ENCODE measurements at regions of chr12 and their contacts with region 1.

Region 1: DNA sequence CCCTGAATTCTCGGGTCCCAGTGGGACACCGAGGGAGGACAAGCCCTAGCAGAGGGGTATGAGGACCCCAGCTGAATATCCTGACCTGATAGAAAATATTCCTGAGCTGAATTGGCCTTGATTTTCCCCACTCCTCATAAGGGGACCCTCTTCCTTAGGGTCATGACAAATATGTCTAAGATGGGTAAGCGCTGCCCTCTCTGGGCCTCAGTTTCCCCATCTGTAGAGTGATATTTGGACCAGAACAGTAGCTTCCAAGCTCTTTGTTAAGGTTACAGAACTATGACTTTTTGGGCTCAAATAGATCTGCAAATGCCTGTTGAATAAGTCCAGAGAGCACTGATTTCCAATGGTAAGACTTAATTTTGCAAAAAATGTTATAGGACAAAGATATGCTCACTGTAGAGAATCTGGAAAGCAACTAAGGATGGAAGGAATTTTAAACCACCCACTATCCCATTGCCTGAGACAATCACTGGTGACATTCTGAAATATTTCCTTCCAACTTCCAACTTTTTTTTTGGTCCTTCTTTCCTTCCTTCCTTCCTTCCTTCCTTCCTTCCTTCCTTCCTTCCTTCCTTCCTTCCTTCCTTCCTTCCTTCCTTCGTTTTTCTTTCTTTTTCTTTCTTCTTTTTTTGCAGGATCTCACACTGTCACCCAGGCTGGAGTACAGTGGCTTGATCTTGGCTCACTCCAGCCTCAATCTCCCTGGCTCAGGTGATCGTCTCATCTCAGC is 32.0 kb downstream of the MYL2 start:
- DNase-seq: no peak
- H3K4me3 Mint-ChIP-seq: peak overlapping the region; percentile 80
- H3K27ac Mint-ChIP-seq: no peak overlapping the region
- H3K4me1 Mint-ChIP-seq: no peaks in the 10 kb centered on the region
- H3K27me3 Mint-ChIP-seq: peaks cover 50% of the 10 kb centered on the region
- CTCF ChIP-seq: no peak

Region 2: DNA sequence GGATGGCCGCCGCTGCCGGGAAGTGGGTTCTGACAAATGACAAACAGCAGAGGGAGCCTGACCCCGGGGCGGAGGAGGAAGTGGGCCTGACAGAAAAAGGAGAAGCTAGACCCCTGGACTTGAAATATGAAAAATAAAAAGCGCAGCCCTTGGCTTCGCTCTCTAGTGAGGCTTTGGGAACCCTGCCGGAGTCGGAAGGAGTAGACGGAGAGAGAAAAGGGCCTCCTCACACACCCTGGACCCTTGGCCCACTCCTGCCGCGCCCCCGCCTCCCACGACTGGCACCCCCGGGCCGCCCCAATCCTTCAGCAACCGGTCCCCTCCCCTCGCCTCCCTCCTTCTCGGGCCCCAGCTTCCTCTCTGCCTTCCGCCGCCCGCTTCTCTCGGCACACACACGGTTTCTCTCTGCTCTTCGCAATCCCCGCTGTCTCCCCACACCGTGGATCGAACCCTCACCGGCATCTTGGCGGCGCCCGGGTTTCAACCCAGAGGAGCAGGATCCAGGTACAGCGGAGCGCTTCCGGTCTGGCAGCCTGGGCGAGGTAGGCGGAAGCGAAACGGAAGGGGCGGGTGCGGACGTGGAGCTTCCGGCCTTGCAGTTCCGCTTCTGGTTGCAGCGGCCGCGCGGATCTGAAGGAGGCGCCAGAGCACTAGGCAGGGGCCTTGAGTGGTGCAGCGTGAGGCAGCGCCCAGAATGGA is 438.5 kb before region 1 on chr12 and contains the start of gene ARPC3:
- CTCF ChIA-PET with region 1: interaction called, 7 read pairs
- intact Hi-C with region 1: loop called (anchors 5 kb)
- DNase-seq: peak; percentile 96
- H3K4me3 Mint-ChIP-seq: peak within 1 kb of the TSS; percentile 92
- H3K27ac Mint-ChIP-seq: peak within 1 kb of the TSS; percentile 96
- H3K4me1 Mint-ChIP-seq: peaks cover 8% of the 10 kb centered on the region
- H3K27me3 Mint-ChIP-seq: no peaks in the 10 kb centered on the region
- CTCF ChIP-seq: peak; percentile 79
- total RNA-seq, gene ARPC3: 321 and 344 TPM in 2 replicates

Region 3: DNA sequence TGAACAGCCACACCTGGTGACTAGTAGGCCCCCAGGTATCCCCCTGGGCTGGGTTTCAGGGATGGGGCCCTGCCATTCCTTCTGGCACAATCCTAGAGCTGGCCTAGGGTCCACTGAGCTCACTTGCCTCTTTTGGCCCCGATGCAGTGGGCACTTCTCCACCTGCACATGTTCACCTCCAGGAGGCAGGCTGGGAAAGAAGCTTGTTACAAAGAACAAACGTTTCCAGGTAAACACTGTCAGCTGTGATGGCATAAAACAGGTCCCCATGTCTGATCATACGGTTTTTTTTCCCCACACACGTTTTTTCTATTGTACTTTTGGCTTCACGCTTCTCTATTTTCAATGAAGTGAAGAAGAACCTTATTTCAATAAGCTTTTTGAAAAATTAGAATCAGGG is 183.7 kb before region 1 on chr12:
- CTCF ChIA-PET with region 1: interaction called, 23 read pairs
- intact Hi-C with region 1: loop called (anchors 1 kb)
- DNase-seq: peak; percentile 62
- H3K4me3 Mint-ChIP-seq: no peak overlapping the region
- H3K27ac Mint-ChIP-seq: no peak overlapping the region
- H3K4me1 Mint-ChIP-seq: peaks cover 8% of the 10 kb centered on the region
- H3K27me3 Mint-ChIP-seq: no peaks in the 10 kb centered on the region
- CTCF ChIP-seq: no peak

Region 4: DNA sequence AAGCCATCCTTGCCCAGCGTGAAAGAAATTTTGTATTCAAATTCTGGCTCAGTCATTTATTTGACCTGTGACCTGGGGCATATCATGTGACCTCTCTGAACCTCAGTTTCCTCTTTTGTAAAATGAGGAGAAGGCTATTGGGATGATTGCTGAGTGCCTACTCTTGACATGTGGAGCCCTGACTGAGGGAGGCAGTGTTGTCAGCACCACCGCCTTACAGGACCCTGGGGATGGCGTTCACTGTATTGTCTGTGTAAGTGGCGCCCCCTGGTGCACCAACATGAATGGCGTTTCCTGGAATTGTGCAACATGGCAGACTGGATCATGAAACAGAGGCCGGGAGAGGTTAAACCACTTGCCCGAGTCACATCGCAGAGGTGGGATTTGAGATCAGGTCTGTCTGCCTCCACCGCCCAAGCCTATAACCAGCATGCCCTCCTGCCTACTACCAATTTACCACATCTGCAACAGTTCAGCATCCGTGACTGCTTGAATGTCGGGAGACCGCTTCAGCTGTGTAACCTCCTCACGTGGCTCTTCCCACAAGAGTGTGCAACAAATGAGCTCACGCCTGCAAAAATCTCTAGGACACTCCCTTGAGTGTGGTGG is 61.7 kb before region 1 on chr12:
- CTCF ChIA-PET with region 1: interaction called, 7 read pairs
- intact Hi-C with region 1: loop called (anchors 1 kb)
- DNase-seq: peak; percentile 93
- H3K4me3 Mint-ChIP-seq: peak overlapping the region; percentile 61
- H3K27ac Mint-ChIP-seq: no peak overlapping the region
- H3K4me1 Mint-ChIP-seq: no peaks in the 10 kb centered on the region
- H3K27me3 Mint-ChIP-seq: peaks cover 31% of the 10 kb centered on the region
- CTCF ChIP-seq: peak; percentile 95

Region 5: DNA sequence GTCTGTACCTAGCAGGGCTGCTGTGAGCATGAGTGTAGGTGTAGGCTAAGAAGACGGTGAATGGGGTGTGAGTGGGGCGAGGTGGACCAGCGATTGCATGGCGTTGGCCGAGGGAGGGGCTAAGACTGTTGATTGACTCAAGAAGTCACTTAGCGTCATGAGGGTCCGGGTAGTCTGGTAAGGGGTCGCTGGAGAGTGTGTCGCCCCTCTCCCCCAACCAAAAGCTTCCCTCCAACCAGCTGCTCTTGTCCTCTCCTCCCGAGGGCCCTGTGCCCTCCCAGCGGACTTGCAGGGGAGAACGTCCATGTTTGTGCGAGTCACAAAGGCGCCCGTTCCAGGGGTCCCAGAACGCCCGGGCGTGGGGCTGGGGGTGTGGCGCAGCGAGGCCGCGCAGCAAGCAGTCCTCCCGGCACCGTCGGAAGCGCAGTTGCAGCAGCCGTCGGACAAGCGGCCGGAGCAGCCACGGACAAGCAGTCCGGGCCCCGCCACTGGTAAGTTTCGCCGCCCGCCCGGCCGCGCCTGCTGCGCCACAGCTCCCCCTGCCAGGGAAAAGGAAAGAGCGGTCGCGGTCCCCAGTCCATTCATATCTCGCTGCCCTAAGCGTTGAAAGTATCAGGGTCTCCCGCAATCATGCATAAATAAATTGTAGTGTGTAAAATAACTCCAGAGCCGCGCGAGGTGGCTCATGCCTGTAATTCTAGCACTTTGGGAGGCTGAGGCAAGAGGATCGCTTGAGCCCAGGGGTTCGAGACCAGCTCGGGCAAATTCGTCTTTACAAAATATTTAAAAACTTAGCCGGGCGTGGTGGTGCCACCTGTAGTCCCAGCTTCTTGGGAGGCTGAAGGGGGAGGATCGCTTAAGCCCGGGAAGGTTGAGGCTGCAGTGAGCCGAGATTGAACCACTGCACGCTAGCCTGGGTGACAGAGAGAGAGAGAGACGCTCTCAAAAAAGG is 41.5 kb before region 1 on chr12 and contains the start of gene CCDC63:
- CTCF ChIA-PET with region 1: interaction called, 5 read pairs
- intact Hi-C with region 1: loop called (anchors 2 kb)
- DNase-seq: peak; percentile 82
- H3K4me3 Mint-ChIP-seq: peak within 1 kb of the TSS; percentile 75
- H3K27ac Mint-ChIP-seq: no peak within 1 kb of the TSS
- H3K4me1 Mint-ChIP-seq: no peaks in the 10 kb centered on the region
- H3K27me3 Mint-ChIP-seq: peaks cover 75% of the 10 kb centered on the region
- CTCF ChIP-seq: peak; percentile 62
- total RNA-seq, gene CCDC63: not detected in 2 replicates

Region 6: DNA sequence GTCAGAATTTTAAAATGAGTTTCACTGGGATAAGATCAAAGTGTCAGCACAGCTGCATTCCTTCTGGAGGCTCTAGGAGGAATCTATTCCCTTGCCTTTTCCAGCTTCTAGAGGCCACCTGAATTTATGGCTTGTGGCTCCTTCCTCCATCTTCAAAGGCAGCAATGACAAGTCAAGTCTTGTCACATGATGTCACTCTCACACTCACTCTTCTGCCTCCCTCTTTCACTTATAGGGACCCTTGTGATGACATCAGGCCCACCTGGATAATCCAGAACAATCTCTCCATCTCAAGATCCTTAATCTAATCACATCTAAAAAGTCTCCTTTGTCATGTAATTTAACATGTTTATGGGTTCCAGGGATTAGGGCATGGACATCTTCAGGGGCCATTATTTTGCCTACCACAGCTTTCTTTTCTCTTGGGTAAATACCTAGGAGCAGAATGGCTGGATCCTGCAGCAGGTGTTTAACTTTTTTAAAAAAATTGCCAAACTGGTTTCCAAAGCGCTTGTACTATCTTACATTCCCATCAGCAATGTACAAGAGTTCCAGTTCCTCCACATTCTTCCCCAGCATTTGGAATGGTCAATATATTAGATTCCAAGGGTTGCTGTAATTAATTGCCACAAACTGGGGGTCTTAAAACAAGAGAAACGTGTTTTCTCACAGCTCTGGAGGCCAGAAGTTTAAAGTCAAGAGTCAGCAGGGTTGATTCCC is 59.5 kb after region 1 on chr12:
- CTCF ChIA-PET with region 1: no interaction called
- intact Hi-C with region 1: no loop called
- DNase-seq: no peak
- H3K4me3 Mint-ChIP-seq: no peak overlapping the region
- H3K27ac Mint-ChIP-seq: no peak overlapping the region
- H3K4me1 Mint-ChIP-seq: no peaks in the 10 kb centered on the region
- H3K27me3 Mint-ChIP-seq: peaks cover 38% of the 10 kb centered on the region
- CTCF ChIP-seq: no peak